Activated CD8-positive, alpha-beta memory T cell treated with anti-CD3 and anti-CD28 coated beads, Interleukin-2, amount 10 ng/mL, durations not matched to agents 7 days and 5 days (primary cell): ENCODE measurements at regions of chr17 and their contacts with region 1.

Region 1: DNA sequence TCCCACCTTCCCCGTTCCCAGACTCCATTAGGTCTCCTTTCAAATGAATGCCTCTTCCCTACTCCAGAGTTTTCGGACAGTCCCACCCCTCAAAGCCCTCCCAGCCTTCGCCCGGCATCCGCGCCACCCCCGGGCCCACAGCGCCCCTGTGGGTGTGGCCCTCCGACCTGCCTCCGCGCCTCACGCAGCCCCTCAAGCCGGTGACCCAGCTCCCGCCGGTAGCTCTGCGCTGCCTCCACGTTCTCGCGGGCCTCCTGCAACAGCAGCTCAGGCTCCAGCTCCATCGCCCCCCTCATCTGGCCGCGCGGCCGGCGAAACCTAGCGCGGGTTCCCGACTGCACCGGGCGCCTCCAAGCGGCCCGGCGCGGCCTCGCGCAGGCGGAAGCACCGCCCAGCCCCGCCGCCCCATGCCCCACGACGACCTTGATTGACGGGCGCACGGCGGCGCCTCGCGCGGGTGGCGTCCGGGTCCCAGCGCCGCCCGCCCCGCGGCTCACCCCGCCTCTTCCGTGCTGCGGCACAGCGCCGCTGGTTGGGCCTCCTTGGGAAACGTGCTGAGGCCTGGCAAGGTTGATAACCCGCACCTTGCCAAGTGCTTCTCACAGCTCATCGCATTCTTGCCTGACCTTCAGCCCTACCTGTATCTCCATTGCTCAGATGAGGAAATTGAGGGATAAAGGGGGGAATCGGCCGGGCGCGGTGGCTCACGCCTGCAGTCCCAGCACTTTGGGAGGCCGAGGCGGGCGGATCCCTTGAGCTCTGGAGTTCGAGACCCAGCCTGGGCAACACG is at the start of gene CRLF3:
- DNase-seq: peak; percentile 93
- ATAC-seq: peak; percentile 96
- H3K4me3 Mint-ChIP-seq: peak within 1 kb of the TSS; percentile 100
- H3K27ac Mint-ChIP-seq: peak within 1 kb of the TSS; percentile 97
- H3K4me1 Mint-ChIP-seq: peaks cover 41% of the 10 kb centered on the region
- H3K27me3 Mint-ChIP-seq: no peaks in the 10 kb centered on the region
- total RNA-seq, gene CRLF3: 52.6 to 58.2 TPM

Region 2: GRCh38 chr17:30677550-30678249 is 146.9 kb before region 1 on chr17:
- CTCF ChIA-PET with region 1: no interaction called
- DNase-seq: no peak
- ATAC-seq: no peak
- H3K4me3 Mint-ChIP-seq: no peak overlapping the region
- H3K27ac Mint-ChIP-seq: no peak overlapping the region
- H3K4me1 Mint-ChIP-seq: peaks cover 1% of the 10 kb centered on the region
- H3K27me3 Mint-ChIP-seq: peaks cover 4% of the 10 kb centered on the region

Region 3: DNA sequence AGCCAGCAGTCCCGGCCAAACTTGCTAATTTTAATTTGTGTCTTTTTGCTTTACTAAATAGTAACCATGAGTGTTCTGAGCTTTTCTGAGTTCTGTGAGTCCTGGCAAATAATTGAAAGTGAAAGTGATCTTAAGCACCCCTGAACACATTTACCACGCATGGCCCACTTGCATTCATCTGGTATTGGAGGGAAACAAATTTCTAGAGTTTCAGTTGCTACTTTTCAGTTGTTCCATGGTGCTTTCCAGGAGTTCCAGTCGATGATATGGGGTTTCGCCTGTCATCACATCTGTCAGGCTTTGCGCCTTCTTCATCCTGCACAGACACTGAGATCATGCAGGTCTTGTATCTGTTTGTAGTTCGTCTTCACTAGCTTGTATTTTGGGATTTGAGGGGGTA is 44.2 kb before region 1 on chr17:
- CTCF ChIA-PET with region 1: interaction called, 10 read pairs
- DNase-seq: peak; percentile 45
- ATAC-seq: peak; percentile 67
- H3K4me3 Mint-ChIP-seq: peak overlapping the region; percentile 12
- H3K27ac Mint-ChIP-seq: peak overlapping the region; percentile 58
- H3K4me1 Mint-ChIP-seq: peaks cover 23% of the 10 kb centered on the region
- H3K27me3 Mint-ChIP-seq: no peaks in the 10 kb centered on the region

Region 4: DNA sequence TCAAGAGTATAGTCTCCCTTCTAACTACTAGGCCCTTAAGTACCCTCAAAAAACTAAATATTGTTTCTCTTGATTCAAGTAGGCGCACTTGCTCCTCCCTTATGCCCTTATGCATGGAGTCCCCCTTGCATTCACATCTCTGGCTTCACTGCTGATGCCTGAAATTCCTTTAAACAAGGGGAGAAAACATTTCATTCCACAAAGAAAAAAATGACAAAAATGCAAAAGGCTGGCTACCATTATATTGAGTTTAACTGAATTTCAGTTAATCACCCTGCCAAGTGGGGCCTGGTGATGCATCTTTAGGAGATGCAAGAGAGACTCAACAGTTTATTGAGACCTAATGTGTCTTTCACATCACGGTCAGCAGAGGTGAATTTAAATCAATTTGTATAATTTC is 35.6 kb before region 1 on chr17:
- CTCF ChIA-PET with region 1: interaction called, 15 read pairs
- DNase-seq: no peak
- ATAC-seq: no peak
- H3K4me3 Mint-ChIP-seq: no peak overlapping the region
- H3K27ac Mint-ChIP-seq: peak overlapping the region; percentile 49
- H3K4me1 Mint-ChIP-seq: peaks cover 12% of the 10 kb centered on the region
- H3K27me3 Mint-ChIP-seq: no peaks in the 10 kb centered on the region

Region 5: DNA sequence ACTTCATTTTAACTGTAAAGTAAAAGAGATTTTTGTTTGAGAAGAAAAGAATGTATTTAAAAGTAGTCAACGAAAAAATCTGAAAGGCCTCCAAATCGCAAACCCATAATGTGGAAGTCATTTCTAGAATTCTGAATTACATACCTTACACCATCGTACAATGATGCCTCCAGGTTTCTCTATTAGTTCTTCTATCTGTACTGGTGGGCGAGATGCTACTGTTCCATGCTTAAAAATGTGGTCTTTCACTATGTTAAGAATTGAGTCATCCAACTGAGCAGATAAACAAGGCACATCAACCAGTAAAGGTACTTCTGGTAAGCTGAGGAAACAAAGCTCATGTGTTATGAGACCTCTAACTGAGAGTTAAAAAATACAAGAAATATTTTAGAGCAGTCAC is 28.5 kb before region 1 on chr17:
- CTCF ChIA-PET with region 1: interaction called, 15 read pairs
- DNase-seq: no peak
- ATAC-seq: peak; percentile 96
- H3K4me3 Mint-ChIP-seq: no peak overlapping the region
- H3K27ac Mint-ChIP-seq: peak overlapping the region; percentile 69
- H3K4me1 Mint-ChIP-seq: peaks cover 17% of the 10 kb centered on the region
- H3K27me3 Mint-ChIP-seq: no peaks in the 10 kb centered on the region

Region 6: DNA sequence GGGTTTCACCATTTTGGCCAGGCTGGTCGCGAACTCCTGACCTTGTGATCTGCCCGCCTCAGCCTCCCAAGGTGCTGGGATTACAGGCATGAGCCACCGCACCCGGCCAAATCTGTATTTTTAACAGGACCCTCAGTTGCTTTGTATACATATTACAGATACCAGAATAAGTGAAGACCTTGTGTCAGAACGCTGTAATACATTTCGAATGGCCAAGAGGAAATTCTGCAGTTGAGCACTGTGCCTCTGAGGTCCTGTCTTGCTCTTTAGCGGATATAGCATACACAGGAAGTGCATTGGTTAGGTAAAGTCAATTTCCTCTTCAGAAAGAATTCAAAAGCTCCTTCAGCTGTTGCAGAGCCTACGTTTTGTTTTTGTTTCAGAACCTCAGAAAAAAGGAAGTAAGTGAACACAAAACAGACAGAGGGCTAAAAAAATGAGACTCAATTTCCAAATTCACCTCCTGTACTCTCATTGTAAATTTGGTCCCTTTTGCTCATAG is 15.7 kb before region 1 on chr17:
- CTCF ChIA-PET with region 1: interaction called, 198 read pairs
- DNase-seq: peak; percentile 69
- ATAC-seq: peak; percentile 91
- H3K4me3 Mint-ChIP-seq: peak overlapping the region; percentile 84
- H3K27ac Mint-ChIP-seq: peak overlapping the region; percentile 98
- H3K4me1 Mint-ChIP-seq: peaks cover 63% of the 10 kb centered on the region
- H3K27me3 Mint-ChIP-seq: no peaks in the 10 kb centered on the region

Region 7: DNA sequence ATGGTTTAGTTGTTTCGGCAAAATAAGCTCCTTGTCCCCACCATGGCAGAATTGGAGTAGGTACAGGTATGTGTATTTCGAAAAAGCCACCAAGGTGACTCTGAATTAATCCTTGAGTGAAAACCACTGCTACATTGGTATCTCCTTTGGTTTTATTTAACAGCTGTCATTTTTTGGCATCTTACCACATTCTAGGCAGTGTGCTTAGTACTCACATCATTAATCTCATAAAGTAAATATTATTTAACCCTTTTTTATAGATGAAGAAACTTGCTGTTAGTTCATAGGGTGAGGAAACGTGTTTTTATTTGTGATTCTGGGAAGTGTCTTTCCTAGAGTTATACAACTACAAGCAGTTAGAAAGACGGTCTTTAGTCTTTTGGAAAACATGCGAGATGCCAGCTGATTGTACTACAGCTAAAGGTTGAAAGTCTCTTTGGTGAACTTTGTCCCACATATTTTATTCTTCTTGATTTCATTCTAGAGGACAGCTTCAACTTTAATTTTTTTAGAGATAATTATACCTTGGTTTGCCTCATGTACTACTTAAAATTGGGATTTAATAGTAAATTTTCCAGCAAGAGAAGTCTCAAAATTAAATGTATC is 13.8 kb after region 1 on chr17:
- CTCF ChIA-PET with region 1: interaction called, 30 read pairs
- DNase-seq: no peak
- ATAC-seq: no peak
- H3K4me3 Mint-ChIP-seq: no peak overlapping the region
- H3K27ac Mint-ChIP-seq: no peak overlapping the region
- H3K4me1 Mint-ChIP-seq: peaks cover 24% of the 10 kb centered on the region
- H3K27me3 Mint-ChIP-seq: no peaks in the 10 kb centered on the region